ENCODE measurements at regions of chr11 and their contacts with region 1.

Region 1: GRCh38 chr11:8911029-8911826 is at the start of gene AKIP1:
- DNase-seq: peak; percentile 48 to 87 (median 61)
- ATAC-seq: peak; percentile 75
- H3K4me3 ChIP-seq: peak within 1 kb of the TSS; percentile 79
- H3K4me3 Mint-ChIP-seq: peak within 1 kb of the TSS; percentile 86 to 95 (median 92)
- H3K27ac ChIP-seq: peak within 1 kb of the TSS; percentile 71
- H3K27ac Mint-ChIP-seq: peak within 1 kb of the TSS; percentile 58 to 91 (median 78)
- H3K4me1 ChIP-seq: peaks cover 0 to 4% of the 10 kb centered on the region in 2 donors
- H3K4me1 Mint-ChIP-seq: peaks cover 26 to 51% (median 41%) of the 10 kb centered on the region in 7 donors
- H3K27me3 ChIP-seq: no peaks in the 10 kb centered on the region
- H3K27me3 Mint-ChIP-seq: peaks cover 0 to 24% (median 0%) of the 10 kb centered on the region in 5 donors
- total RNA-seq, gene AKIP1: 5.6 to 20.9 (median 11.2) TPM

Region 2: GRCh38 chr11:8813658-8814057 is 97.6 kb before region 1 on chr11:
- CTCF ChIA-PET with region 1: no interaction called
- POLR2A ChIA-PET with region 1: no interaction called
- intact Hi-C with region 1: loop called in 1 of 2 experiments (anchors 10 kb)
- DNase-seq: peak in 4 of 9 donors; percentile 5 to 44 (median 11)
- ATAC-seq: peak; percentile 58
- H3K4me3 ChIP-seq: no peak overlapping the region
- H3K4me3 Mint-ChIP-seq: no peak overlapping the region
- H3K27ac ChIP-seq: no peak overlapping the region
- H3K27ac Mint-ChIP-seq: no peak overlapping the region
- H3K4me1 ChIP-seq: no peaks in the 10 kb centered on the region
- H3K4me1 Mint-ChIP-seq: peaks cover 6 to 15% (median 10%) of the 10 kb centered on the region in 7 donors
- H3K27me3 ChIP-seq: no peaks in the 10 kb centered on the region
- H3K27me3 Mint-ChIP-seq: peaks cover 0 to 27% (median 18%) of the 10 kb centered on the region in 5 donors

Region 3: DNA sequence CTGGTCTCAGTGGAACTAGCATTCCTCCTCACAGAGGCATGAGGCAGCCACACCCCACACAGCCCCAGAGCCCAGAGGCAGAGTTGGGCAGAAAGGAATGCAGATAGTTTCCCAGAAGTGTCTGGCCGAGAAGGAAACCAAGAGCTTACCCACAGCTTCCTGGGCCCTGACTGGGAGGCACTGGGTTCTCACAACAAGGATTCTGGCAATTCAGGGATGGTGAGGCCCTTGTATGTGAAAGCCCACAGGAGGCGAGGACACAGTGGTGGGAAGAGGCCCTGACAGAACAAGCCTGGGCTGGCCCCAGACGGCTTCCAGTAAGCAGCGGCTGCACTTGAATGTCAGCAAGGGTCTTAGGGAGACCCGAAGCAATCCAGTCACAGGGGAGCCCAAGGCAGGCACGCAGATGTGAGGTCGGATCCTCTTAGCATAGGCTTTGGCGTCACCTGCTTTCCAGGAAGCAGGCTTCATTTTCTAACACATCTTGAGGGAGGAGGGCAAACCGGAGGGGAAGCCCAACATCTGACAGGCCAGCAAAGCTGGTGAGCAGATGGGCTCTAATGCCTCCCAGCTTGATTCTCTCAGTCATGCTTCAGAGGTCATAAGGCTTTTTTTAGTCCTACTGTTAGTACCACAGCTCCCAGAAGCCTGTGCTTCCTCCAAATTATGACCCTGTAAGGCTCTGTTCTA is 78.5 kb before region 1 on chr11:
- CTCF ChIA-PET with region 1: no interaction called
- POLR2A ChIA-PET with region 1: no interaction called
- intact Hi-C with region 1: no loop called
- DNase-seq: no peak
- ATAC-seq: no peak
- H3K4me3 ChIP-seq: no peak overlapping the region
- H3K4me3 Mint-ChIP-seq: peak overlapping the region in 1 of 10 donors; percentile 58
- H3K27ac ChIP-seq: no peak overlapping the region
- H3K27ac Mint-ChIP-seq: peak overlapping the region in 2 of 9 donors; percentile 27 to 81
- H3K4me1 ChIP-seq: no peaks in the 10 kb centered on the region
- H3K4me1 Mint-ChIP-seq: peaks cover 0 to 19% (median 0%) of the 10 kb centered on the region in 7 donors
- H3K27me3 ChIP-seq: no peaks in the 10 kb centered on the region
- H3K27me3 Mint-ChIP-seq: peaks cover 0 to 24% (median 4%) of the 10 kb centered on the region in 5 donors

Region 4: GRCh38 chr11:8899119-8899753 is 12.0 kb before region 1 on chr11:
- CTCF ChIA-PET with region 1: no interaction called
- POLR2A ChIA-PET with region 1: no interaction called
- intact Hi-C with region 1: no loop called
- DNase-seq: no peak
- ATAC-seq: no peak
- H3K4me3 ChIP-seq: no peak overlapping the region
- H3K4me3 Mint-ChIP-seq: no peak overlapping the region
- H3K27ac ChIP-seq: no peak overlapping the region
- H3K27ac Mint-ChIP-seq: no peak overlapping the region
- H3K4me1 ChIP-seq: no peaks in the 10 kb centered on the region
- H3K4me1 Mint-ChIP-seq: no peaks in the 10 kb centered on the region
- H3K27me3 ChIP-seq: no peaks in the 10 kb centered on the region
- H3K27me3 Mint-ChIP-seq: peaks cover 0 to 12% (median 0%) of the 10 kb centered on the region in 5 donors

Region 5: DNA sequence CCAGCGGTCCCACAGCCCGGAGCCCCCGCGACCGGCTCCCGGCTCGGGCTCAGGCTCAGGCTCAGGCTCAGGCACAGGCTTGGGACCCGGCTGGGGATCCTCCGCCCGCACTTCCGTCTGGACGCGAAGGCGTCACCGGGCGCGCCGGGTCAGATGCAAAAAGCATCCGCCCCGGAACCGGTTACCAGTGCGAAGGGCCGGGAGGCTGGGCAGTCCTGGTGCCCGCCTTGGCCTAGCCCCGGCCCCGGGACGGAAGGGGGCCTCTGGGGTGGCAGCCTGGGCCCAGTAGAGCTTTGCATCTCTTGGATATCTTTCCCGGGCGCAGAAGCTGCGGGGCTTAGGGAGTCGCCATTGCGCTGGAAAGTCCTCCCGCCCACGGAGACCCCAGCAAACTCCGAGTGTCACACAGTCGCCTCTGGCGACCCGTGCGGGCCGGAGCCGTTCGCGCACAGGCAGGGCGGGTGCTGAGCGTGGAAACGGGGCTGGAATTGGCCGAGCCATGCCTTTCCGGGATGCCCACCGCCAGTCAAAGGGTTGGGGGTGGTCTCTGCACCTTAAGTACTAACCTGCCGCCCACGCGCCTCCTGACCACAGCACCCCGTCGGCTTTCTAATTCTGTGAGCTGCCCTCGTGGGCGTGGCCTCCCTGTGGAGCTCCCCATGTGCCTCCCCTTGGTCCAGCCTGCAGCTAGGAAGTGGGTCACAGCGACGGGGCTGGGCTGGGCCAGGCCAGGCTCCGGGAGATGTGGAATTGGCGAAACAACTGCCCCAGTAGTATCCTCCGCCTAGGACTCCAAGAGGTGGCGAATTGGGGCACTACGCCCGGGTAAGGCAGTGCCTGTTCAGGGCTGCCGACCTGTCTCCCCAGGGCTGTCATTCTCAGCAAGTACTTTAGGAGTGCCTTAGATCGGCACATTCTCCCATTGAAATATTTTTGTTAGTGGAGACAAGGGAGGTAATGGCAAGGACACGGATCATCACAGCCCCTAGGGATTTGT is 53.4 kb after region 1 on chr11 and contains the start of gene TMEM9B:
- CTCF ChIA-PET with region 1: interaction called, 31 read pairs
- POLR2A ChIA-PET with region 1: interaction called, 9 read pairs
- intact Hi-C with region 1: loop called (anchors 1 kb)
- DNase-seq: peak; percentile 35 to 85 (median 66)
- ATAC-seq: peak; percentile 90
- H3K4me3 ChIP-seq: peak within 1 kb of the TSS; percentile 96
- H3K4me3 Mint-ChIP-seq: peak within 1 kb of the TSS; percentile 94 to 99 (median 98)
- H3K27ac ChIP-seq: peak within 1 kb of the TSS; percentile 92
- H3K27ac Mint-ChIP-seq: peak within 1 kb of the TSS; percentile 94 to 99 (median 98)
- H3K4me1 ChIP-seq: peaks cover 13 to 17% of the 10 kb centered on the region in 2 donors
- H3K4me1 Mint-ChIP-seq: peaks cover 17 to 45% (median 32%) of the 10 kb centered on the region in 7 donors
- H3K27me3 ChIP-seq: no peaks in the 10 kb centered on the region
- H3K27me3 Mint-ChIP-seq: no peaks in the 10 kb centered on the region
- total RNA-seq, gene TMEM9B: 16.2 to 33.6 (median 30.6) TPM

Region 6: DNA sequence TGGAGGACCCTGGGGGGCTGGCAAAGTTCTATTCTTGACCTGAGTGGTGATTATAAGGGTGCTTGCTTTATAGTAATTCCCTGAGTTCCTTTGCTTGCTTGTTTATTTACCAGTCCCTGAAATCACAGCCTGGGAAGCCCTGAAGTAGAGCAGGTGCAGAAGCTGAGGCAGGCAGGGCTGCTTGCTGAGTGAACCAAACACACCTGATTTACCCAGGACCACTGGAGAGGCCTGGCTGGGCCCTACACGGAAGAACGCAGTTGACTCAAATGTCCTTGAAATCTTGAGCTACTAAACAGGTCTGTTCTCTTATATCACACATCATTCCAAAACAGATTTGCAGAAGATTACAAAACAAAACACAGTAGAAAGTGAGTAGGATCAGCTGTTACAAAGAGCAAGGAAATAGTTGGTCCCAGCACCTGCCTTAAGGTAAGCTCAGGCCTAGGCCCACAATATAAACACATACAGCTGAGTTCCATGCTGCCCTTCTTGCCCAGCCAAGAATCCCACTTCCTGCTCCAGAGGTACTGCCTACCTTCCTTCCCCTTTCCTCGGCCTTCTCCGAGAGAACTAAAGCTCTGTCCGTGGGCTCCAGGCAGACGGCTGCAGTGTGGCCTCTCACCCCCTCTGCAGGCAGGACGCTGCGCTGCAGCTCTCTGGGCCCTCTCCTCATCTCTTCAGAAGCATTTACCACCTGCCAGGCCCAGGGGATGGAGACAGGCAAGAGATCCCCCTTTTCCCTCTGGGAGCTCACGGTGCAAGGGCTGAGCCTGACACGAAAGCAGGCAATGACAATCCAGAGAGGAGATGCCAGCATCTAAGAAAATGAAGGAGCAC is 226.3 kb after region 1 on chr11:
- CTCF ChIA-PET with region 1: interaction called, 20 read pairs
- POLR2A ChIA-PET with region 1: interaction called, 3 read pairs
- intact Hi-C with region 1: loop called (anchors 1 kb)
- DNase-seq: peak; percentile 20 to 72 (median 52)
- ATAC-seq: peak; percentile 94
- H3K4me3 ChIP-seq: no peak overlapping the region
- H3K4me3 Mint-ChIP-seq: peak overlapping the region in 6 of 10 donors; percentile 1 to 54 (median 11)
- H3K27ac ChIP-seq: no peak overlapping the region
- H3K27ac Mint-ChIP-seq: peak overlapping the region; percentile 3 to 84 (median 60)
- H3K4me1 ChIP-seq: peaks cover 0 to 3% of the 10 kb centered on the region in 2 donors
- H3K4me1 Mint-ChIP-seq: peaks cover 7 to 35% (median 15%) of the 10 kb centered on the region in 7 donors
- H3K27me3 ChIP-seq: no peaks in the 10 kb centered on the region
- H3K27me3 Mint-ChIP-seq: no peaks in the 10 kb centered on the region

Region 7: GRCh38 chr11:9506489-9507276 is 595.5 kb after region 1 on chr11:
- CTCF ChIA-PET with region 1: interaction called, 6 read pairs
- POLR2A ChIA-PET with region 1: no interaction called
- intact Hi-C with region 1: loop called in 1 of 2 experiments (anchors 5 kb)
- DNase-seq: peak; percentile 48 to 74 (median 66)
- ATAC-seq: peak; percentile 92
- H3K4me3 ChIP-seq: no peak overlapping the region
- H3K4me3 Mint-ChIP-seq: no peak overlapping the region
- H3K27ac ChIP-seq: no peak overlapping the region
- H3K27ac Mint-ChIP-seq: peak overlapping the region in 2 of 9 donors; percentile 35 to 52
- H3K4me1 ChIP-seq: no peaks in the 10 kb centered on the region
- H3K4me1 Mint-ChIP-seq: peaks cover 0 to 13% (median 6%) of the 10 kb centered on the region in 7 donors
- H3K27me3 ChIP-seq: no peaks in the 10 kb centered on the region
- H3K27me3 Mint-ChIP-seq: no peaks in the 10 kb centered on the region

Region 8: DNA sequence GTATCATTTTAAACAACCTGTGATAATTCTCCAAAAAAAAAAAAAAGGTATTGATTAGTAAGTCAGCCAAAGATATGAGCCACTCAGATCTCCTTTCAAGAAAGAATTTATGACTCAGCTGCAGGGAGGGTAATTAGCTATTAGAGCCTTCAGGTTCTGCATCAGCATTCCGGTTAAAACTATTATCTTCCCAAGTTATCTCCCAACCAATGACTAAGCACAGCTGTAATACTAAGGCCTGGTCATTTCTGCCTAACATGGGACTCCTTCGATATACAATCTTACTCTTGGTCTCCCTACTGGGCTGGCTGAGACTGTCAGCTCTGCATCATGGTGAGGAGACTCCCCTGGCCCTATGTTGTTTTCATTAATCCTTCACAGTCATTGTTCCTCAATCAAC is 1322.4 kb after region 1 on chr11:
- CTCF ChIA-PET with region 1: no interaction called
- POLR2A ChIA-PET with region 1: no interaction called
- intact Hi-C with region 1: no loop called
- DNase-seq: no peak
- ATAC-seq: no peak
- H3K4me3 ChIP-seq: no peak overlapping the region
- H3K4me3 Mint-ChIP-seq: no peak overlapping the region
- H3K27ac ChIP-seq: no peak overlapping the region
- H3K27ac Mint-ChIP-seq: no peak overlapping the region
- H3K4me1 ChIP-seq: no peaks in the 10 kb centered on the region
- H3K4me1 Mint-ChIP-seq: peaks cover 0 to 3% (median 0%) of the 10 kb centered on the region in 7 donors
- H3K27me3 ChIP-seq: no peaks in the 10 kb centered on the region
- H3K27me3 Mint-ChIP-seq: no peaks in the 10 kb centered on the region